Mammary epithelial cell (primary cell): ENCODE measurements at regions of chr13 and their contacts with region 1.

Region 1: GRCh38 chr13:80313668-80314278 is 27.2 kb downstream of the SPRY2 start:
- DNase-seq: no peak
- H3K4me3 ChIP-seq: no peak overlapping the region
- H3K27ac ChIP-seq: no peak overlapping the region
- H3K4me1 ChIP-seq: no peaks in the 10 kb centered on the region
- H3K27me3 ChIP-seq: no peaks in the 10 kb centered on the region
- CTCF ChIP-seq: no peak

Region 2: DNA sequence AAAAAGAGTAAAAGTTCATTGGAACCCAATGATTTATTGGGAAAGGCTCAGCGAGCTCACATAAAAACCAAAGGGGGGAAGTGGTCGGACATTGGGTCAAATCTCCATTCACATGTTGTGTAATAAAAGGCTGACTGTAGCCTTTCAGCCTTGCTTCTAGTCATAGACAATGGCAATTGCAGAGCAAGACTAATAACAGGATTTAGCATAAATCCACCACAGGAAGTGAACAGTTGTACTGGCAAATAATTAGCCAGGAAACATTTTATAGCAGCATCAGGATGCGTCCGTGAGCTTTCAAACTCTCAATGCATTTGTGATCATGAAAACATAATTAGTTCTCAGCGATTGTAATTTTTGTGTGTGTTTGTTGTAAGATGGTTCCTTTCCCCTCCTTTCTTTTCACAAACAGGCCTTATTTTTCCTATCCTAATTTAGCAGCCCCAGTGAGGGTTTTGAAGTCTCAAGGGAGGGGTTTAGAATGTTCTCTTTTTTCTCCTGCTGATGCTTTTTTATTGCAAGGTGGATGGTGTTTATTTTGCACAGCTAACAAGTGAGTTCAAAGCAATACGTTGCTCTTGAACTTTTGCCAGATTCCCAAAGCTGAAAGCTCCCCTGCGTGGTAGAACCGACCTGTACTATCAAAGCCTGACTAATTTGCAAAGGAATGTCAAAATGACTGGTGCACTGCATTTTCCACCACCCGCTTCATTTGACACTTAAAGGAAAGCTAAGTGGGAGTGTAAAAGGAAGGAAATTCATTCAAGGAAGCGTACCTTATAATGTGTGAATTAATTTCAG is 78.4 kb before region 1 on chr13:
- CTCF ChIA-PET with region 1: no interaction called
- dilution Hi-C with region 1: no loop called
- in situ Hi-C with region 1: no loop called
- intact Hi-C with region 1: no loop called
- DNase-seq: peak; percentile 20
- H3K4me3 ChIP-seq: no peak overlapping the region
- H3K27ac ChIP-seq: no peak overlapping the region
- H3K4me1 ChIP-seq: no peaks in the 10 kb centered on the region
- H3K27me3 ChIP-seq: no peaks in the 10 kb centered on the region
- CTCF ChIP-seq: no peak

Region 3: GRCh38 chr13:80276371-80277289 is 37.1 kb before region 1 on chr13:
- CTCF ChIA-PET with region 1: no interaction called
- dilution Hi-C with region 1: no loop called
- in situ Hi-C with region 1: no loop called
- intact Hi-C with region 1: no loop called
- DNase-seq: no peak
- H3K4me3 ChIP-seq: no peak overlapping the region
- H3K27ac ChIP-seq: no peak overlapping the region
- H3K4me1 ChIP-seq: no peaks in the 10 kb centered on the region
- H3K27me3 ChIP-seq: no peaks in the 10 kb centered on the region
- CTCF ChIP-seq: no peak

Region 4: GRCh38 chr13:80329250-80329649 is 15.5 kb after region 1 on chr13:
- CTCF ChIA-PET with region 1: interaction called, 11 read pairs
- dilution Hi-C with region 1: no loop called
- in situ Hi-C with region 1: no loop called
- intact Hi-C with region 1: no loop called
- DNase-seq: no peak
- H3K4me3 ChIP-seq: no peak overlapping the region
- H3K27ac ChIP-seq: no peak overlapping the region
- H3K4me1 ChIP-seq: no peaks in the 10 kb centered on the region
- H3K27me3 ChIP-seq: no peaks in the 10 kb centered on the region
- CTCF ChIP-seq: no peak

Region 5: GRCh38 chr13:80363890-80364503 is 50.2 kb after region 1 on chr13:
- CTCF ChIA-PET with region 1: no interaction called
- dilution Hi-C with region 1: no loop called
- in situ Hi-C with region 1: no loop called
- intact Hi-C with region 1: no loop called
- DNase-seq: peak; percentile 5
- H3K4me3 ChIP-seq: peak overlapping the region in 1 of 3 experiments; percentile 41
- H3K27ac ChIP-seq: peak overlapping the region; percentile 27
- H3K4me1 ChIP-seq: peaks cover 10% of the 10 kb centered on the region
- H3K27me3 ChIP-seq: no peaks in the 10 kb centered on the region
- CTCF ChIP-seq: peak; percentile 69 to 81